ENCODE measurements at regions of chr1 and their contacts with region 1.

Region 1: DNA sequence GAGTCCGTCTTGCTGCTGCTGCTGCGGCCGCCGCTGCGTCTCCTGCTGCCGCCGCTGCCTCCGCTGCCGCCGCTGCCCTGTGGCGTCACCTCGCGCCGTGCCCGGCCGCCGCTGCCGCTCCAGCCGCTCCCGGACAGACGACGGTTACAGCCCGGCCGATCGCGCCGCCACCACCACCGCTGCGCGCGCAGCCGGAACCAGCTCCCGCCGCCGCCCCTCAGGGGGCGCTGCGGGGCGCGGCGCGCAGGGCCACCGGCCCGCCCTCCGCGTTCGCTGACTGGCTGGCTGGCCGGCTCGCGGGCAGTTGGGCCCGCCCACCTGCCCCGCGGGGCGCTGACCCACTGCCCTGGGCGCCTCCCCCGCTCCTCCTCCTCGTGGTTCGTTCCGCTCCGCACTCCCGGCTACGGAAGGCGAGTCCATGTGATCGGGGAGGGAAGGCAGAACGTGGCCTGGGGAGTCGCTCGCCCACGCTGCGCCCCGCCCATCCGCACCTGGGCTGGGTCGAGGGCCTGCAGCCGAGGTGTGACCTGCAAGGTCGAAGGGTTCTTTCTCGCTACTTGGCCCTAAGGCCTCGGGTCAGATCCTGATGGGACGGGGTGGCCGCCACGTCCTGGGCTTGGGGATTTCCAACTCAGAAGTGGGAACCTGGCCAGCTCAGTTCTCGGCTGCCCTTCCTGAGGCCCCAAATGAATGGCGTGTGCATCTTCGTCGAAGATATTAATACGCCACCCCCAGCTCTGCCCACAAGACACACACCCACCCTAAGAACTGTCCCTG is at the start of gene PTP4A2:
- DNase-seq: peak; percentile 84 to 98 (median 89)

Region 2: GRCh38 chr1:31723828-31724359 is 214.5 kb before region 1 on chr1:
- intact Hi-C with region 1: no loop called
- DNase-seq: peak; percentile 53 to 95 (median 70)

Region 3: GRCh38 chr1:31843506-31843905 is 94.9 kb before region 1 on chr1:
- intact Hi-C with region 1: loop called (anchors 10 kb)
- DNase-seq: peak in 5 of 10 donors; percentile 12 to 85 (median 38)

Region 4: DNA sequence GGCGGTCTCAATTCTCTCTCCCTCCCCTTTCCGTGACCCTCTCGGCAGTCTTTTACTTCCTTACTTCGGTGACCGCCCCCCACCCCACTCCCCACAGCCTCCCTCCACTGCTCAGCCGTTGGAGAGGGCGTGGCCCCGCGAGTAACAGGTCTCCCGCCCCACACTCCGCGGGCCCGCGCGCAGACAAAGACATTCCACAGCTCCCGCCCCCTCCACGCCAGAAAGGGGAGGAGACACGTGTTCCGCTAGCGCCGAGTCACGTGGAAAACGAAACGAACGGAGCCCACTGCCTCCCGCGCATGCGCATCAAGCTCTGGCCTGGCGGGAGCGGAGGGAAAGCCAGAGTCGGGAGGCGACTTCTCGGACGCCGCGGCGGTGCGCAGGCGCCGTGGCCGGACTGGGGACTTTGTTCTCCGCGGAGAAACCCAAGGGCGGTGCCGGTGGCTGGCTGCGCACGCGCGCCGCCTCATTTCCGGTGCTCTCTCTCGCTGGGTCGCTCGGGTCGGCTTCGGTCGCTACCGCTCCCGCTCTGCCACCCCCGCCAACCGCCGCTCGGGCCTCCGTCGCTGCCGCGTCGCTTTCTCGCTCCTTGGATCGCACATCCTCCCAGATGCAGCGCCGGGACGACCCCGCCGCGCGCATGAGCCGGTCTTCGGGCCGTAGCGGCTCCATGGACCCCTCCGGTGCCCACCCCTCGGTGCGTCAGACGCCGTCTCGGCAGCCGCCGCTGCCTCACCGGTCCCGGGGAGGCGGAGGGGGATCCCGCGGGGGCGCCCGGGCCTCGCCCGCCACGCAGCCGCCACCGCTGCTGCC is 75.2 kb after region 1 on chr1 and contains the start of gene KHDRBS1:
- intact Hi-C with region 1: loop called (anchors 1 kb)
- DNase-seq: peak; percentile 96 to 100 (median 98)

Measured in posterior cingulate gyrus (tissue), 11 donors.